Naive thymus-derived CD8-positive, alpha-beta T cell (primary cell): ENCODE measurements at regions of chr3 and their contacts with region 1.

Region 1: DNA sequence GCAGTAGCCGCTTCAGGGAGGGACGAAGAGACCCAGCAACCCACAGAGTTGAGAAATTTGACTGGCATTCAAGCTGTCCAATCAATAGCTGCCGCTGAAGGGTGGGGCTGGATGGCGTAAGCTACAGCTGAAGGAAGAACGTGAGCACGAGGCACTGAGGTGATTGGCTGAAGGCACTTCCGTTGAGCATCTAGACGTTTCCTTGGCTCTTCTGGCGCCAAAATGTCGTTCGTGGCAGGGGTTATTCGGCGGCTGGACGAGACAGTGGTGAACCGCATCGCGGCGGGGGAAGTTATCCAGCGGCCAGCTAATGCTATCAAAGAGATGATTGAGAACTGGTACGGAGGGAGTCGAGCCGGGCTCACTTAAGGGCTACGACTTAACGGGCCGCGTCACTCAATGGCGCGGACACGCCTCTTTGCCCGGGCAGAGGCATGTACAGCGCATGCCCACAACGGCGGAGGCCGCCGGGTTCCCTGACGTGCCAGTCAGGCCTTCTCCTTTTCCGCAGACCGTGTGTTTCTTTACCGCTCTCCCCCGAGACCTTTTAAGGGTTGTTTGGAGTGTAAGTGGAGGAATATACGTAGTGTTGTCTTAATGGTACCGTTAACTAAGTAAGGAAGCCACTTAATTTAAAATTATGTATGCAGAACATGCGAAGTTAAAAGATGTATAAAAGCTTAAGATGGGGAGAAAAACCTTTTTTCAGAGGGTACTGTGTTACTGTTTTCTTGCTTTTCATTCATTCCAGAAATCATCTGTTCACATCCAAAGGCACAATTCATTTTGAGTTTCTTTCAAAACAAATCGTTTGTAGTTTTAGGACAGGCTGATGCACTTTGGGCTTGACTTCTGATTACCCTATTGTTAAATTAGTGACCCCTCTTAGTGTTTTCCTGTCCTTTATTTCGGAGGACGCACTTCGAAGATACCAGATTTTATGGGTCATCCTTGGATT is at the start of gene MLH1:
- DNase-seq: peak; percentile 88 to 100 (median 99)
- ATAC-seq: peak; percentile 87
- H3K4me3 Mint-ChIP-seq: no peak within 1 kb of the TSS
- H3K27ac Mint-ChIP-seq: no peak within 1 kb of the TSS
- H3K4me1 Mint-ChIP-seq: peaks cover 12 to 38% (median 25%) of the 10 kb centered on the region in 4 donors
- H3K27me3 Mint-ChIP-seq: no peaks in the 10 kb centered on the region
- polyA plus RNA-seq, gene MLH1: 17.1 to 24.4 (median 24.0) TPM

Region 2: DNA sequence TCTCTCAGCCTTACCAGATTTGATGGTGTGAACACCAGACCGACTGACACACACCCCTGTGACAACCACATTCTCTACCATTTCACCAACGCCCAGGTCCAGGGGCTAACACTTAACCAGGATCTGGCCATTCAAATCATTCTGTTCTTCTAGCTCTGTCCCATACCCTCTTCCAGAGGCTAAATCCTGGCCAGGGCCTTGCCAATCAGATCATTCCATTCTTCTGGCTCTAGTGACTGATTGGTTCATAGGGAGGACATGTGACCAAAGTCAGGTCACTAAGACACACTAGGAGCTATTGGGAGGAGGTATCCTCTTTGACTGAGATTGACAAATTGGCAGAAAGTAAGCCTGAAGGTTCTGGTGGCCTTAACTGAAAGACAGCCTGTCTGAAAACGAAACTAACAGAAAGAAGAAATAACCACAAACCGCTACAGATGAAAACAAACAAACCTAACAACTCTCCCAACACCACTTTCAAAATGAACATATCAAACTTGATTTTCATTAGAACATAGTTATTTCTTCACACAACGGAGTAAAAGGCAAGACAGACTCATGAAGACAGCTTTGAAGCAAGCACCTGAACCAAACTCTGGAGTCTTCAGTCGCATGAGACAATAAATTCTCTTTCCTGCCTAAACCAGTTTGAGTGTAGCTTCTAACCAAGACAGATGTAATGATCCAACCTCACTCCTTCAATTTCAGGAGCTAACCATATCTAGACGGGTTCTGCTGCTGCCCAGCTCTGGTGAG is 117.2 kb before region 1 on chr3:
- POLR2A ChIA-PET with region 1: interaction called, 16 read pairs
- DNase-seq: peak in 5 of 10 donors; percentile 9 to 72 (median 61)
- ATAC-seq: peak; percentile 87 to 91
- H3K4me3 Mint-ChIP-seq: peak overlapping the region; percentile 69 to 85 (median 76)
- H3K27ac Mint-ChIP-seq: peak overlapping the region; percentile 90 to 98 (median 95)
- H3K4me1 Mint-ChIP-seq: peaks cover 25 to 61% (median 50%) of the 10 kb centered on the region in 4 donors
- H3K27me3 Mint-ChIP-seq: no peaks in the 10 kb centered on the region

Region 3: GRCh38 chr3:36907911-36908646 is 85.5 kb before region 1 on chr3:
- POLR2A ChIA-PET with region 1: interaction called, 18 read pairs
- DNase-seq: peak; percentile 36 to 82 (median 62)
- ATAC-seq: peak; percentile 77 to 79
- H3K4me3 Mint-ChIP-seq: peak overlapping the region; percentile 87 to 100 (median 98)
- H3K27ac Mint-ChIP-seq: peak overlapping the region; percentile 94 to 100 (median 98)
- H3K4me1 Mint-ChIP-seq: peaks cover 26 to 81% (median 64%) of the 10 kb centered on the region in 4 donors
- H3K27me3 Mint-ChIP-seq: no peaks in the 10 kb centered on the region

Region 4: DNA sequence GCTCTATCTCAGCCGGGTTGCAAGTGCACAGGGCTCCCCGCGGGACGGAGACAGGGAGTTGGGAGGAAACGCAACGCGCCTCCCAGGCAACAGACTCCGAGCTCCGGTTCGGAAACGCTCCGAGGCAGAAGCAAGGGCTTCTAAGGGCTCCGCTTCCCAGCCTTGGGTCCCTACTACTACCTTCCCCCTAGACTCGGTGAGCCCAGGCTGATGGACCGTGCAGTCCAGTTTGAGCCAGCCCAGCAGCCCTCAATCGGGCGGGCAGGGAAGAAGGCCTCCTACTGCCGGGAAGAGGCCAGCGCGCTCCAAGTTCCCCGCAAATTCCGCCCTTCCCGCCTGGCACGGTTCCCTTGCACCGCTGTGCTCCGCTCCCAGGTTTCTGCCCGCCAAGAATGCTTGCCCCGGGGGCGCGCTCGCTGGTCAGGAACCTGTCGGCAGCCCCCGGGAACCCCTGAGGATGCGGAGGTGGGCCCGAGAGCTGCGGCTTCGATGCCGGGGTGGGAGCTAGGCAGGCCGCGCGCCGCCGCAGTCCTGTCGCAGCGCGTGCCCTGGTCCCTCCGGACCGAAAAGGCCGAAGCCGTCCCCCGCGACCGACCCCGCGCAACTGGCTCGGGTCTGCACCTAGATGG is 49.5 kb before region 1 on chr3:
- POLR2A ChIA-PET with region 1: interaction called, 35 read pairs
- DNase-seq: peak; percentile 7 to 64 (median 24)
- ATAC-seq: peak; percentile 43 to 50
- H3K4me3 Mint-ChIP-seq: peak overlapping the region; percentile 77 to 91 (median 82)
- H3K27ac Mint-ChIP-seq: peak overlapping the region in 9 of 10 donors; percentile 17 to 92 (median 85)
- H3K4me1 Mint-ChIP-seq: peaks cover 4 to 25% (median 18%) of the 10 kb centered on the region in 4 donors
- H3K27me3 Mint-ChIP-seq: no peaks in the 10 kb centered on the region